ENCODE measurements at regions of chr1 and their contacts with region 1.

Region 1: DNA sequence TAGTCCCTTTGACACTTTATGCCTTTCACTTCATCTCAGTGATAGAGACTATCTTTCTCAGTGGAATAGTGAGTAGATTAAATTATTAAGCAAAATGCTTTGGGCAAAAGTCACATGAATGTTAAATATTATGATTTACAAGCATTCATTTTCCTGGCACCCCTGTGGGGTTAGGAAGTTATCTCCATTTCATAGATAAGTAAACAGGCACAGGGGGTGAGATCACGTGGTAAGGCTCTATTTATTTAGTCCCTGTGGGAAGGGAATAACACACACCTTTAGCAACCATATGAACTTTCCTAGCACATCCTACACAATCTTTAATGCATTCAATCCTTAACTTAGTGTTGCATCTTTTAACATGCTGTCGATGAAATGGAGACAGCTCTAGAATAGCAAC is 12.3 kb downstream of the PSMB2 start:
- DNase-seq: no peak
- H3K4me3 ChIP-seq: no peak overlapping the region
- H3K27ac ChIP-seq: no peak overlapping the region
- H3K4me1 ChIP-seq: no peaks in the 10 kb centered on the region
- H3K27me3 ChIP-seq: no peaks in the 10 kb centered on the region
- CTCF ChIP-seq: no peak
- POLR2A ChIP-seq: no peak

Region 2: DNA sequence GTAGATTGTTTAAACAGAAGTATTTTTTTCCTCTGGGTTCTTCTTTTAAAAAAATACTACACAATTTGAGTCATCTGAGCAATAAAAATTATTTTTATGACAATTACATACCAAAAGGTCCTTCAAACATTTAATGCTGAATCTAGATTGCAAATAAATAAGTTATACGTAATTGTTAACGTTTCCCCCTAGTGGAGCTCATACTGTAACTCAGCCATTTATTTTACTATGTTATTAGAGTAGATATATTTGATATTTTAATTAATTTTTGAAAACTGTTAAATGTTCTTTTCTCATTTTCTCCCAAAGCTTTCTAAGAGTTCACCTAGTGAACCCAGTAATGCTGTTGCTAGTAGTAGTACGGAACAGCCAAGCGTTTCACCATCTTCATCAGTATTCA is 516.4 kb before region 1 on chr1:
- CTCF ChIA-PET with region 1: no interaction called
- POLR2A ChIA-PET with region 1: no interaction called
- dilution Hi-C with region 1: no loop called
- intact Hi-C with region 1: no loop called
- DNase-seq: peak; percentile 9
- H3K4me3 ChIP-seq: no peak overlapping the region
- H3K27ac ChIP-seq: no peak overlapping the region
- H3K4me1 ChIP-seq: peaks cover 9% of the 10 kb centered on the region
- H3K27me3 ChIP-seq: no peaks in the 10 kb centered on the region
- CTCF ChIP-seq: no peak
- POLR2A ChIP-seq: no peak

Region 3: DNA sequence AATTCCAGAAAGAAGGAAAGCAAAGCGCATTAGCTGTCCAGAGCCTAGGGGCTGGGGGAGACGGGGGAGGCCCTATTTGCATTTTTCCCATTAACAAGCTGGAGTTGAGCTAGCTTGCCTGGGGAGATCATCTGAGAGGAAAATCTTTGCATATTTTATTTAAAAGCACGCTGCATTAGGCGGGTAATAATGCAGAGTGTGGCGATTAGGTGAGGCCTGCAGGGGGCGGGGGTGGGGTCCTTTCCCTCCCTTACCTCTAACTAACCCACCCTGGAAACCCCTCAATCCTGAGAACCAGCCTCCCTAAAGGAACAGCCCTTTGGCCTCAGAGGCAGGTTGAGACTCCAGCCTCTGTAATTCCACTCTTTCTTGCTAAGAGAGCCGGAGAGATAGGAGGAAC is 73.5 kb after region 1 on chr1:
- CTCF ChIA-PET with region 1: no interaction called
- POLR2A ChIA-PET with region 1: no interaction called
- dilution Hi-C with region 1: no loop called
- intact Hi-C with region 1: loop called (anchors 2 kb)
- DNase-seq: no peak
- H3K4me3 ChIP-seq: no peak overlapping the region
- H3K27ac ChIP-seq: no peak overlapping the region
- H3K4me1 ChIP-seq: peaks cover 2% of the 10 kb centered on the region
- H3K27me3 ChIP-seq: peaks cover 65 to 84% of the 10 kb centered on the region in 2 experiments
- CTCF ChIP-seq: peak in 1 of 2 donors; percentile 5
- POLR2A ChIP-seq: no peak

Measured in endothelial cell of umbilical vein (primary cell).